Dorsolateral prefrontal cortex (tissue), 120 donors: ENCODE measurements at regions of chr2 and their contacts with region 1.

Region 1: GRCh38 chr2:231056453-231057424 is at the start of gene PSMD1:
- DNase-seq: peak; percentile 82 to 94 (median 90)
- H3K4me3 ChIP-seq: peak within 1 kb of the TSS; percentile 63 to 100 (median 96)
- H3K27ac ChIP-seq: peak within 1 kb of the TSS; percentile 87 to 100 (median 98)
- H3K27me3 ChIP-seq: no peaks in the 10 kb centered on the region
- CTCF ChIP-seq: peak; percentile 86 to 99 (median 95)
- total RNA-seq, gene PSMD1: 86.5 to 175 (median 121) TPM

Region 2: GRCh38 chr2:230824406-230824978 is 232.2 kb before region 1 on chr2:
- intact Hi-C with region 1: loop called (anchors 5 kb)
- DNase-seq: peak in 7 of 10 donors; percentile 30 to 59 (median 51)
- H3K4me3 ChIP-seq: peak overlapping the region in 37 of 59 donors; percentile 6 to 57 (median 32)
- H3K27ac ChIP-seq: peak overlapping the region in 1 of 59 donors; percentile 31
- H3K27me3 ChIP-seq: peaks cover 0 to 25% (median 12%) of the 10 kb centered on the region in 45 donors
- CTCF ChIP-seq: peak; percentile 64 to 88 (median 79)